ENCODE measurements at regions of chr1 and their contacts with region 1.

Region 1: GRCh38 chr1:53878492-53879105 is 11.0 kb downstream of the YIPF1 start:
- DNase-seq: peak; percentile 39
- H3K4me3 ChIP-seq: no peak overlapping the region
- H3K27ac ChIP-seq: no peak overlapping the region
- H3K4me1 ChIP-seq: no peaks in the 10 kb centered on the region
- H3K27me3 ChIP-seq: no peaks in the 10 kb centered on the region
- CTCF ChIP-seq: peak; percentile 82
- EP300 ChIP-seq: no peak
- RAD21 ChIP-seq: peak; percentile 68

Region 2: DNA sequence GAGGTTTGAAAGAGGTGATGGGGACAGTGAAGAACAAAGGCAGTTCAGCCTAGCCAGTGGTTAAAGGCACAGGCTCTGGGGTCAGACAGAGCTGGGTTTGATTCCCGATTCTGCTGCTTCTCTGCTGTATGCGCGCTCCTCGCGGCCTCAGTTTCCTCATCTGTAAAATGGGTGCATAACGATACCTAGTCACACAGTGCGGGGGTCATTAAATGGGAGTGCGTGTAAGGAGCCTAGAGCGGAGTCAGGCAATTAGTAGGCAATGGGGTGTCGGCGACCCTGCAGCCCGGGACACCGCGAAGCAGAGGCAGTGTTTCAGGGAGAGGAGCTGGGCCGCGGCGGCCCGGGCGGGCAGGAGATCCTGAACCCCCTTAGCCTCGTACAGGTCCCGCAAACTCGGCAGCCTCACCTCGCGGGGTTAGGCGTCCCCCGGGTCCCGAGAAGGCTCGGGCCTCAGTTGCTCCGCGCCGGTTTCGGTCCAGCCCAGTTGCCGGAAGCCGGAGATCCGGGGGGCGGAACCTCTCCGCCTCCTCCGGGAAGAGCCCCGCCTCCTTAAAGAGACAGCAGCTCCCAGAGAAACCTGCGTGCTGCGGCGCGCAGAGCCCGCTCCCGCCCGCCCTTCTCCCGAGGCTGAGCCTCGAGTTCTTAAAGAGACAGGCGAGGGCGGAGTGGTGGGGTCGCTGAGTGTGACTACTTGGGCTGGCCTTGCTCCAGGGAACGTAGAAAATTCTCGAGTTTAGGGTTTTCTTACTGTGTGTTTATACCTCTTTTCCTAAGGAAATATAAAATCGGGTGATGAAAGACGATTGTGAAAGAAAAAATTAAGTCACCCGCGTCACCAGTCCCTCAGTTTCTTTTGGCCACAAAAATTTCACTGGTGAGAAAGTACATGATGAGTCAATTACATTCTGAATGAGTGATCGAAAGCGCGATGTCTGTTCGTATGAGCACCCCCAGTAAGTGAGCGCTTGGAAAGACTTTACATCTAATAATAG is 11.0 kb after region 1 on chr1 and contains the start of gene YIPF1:
- CTCF ChIA-PET with region 1: interaction called, 38 read pairs
- POLR2A ChIA-PET with region 1: no interaction called
- DNase-seq: peak; percentile 94
- H3K4me3 ChIP-seq: peak within 1 kb of the TSS; percentile 80 to 100
- H3K27ac ChIP-seq: peak within 1 kb of the TSS; percentile 54 to 75
- H3K4me1 ChIP-seq: peaks cover 0 to 7% of the 10 kb centered on the region in 2 experiments; a peak in 2 of 4 replicates
- H3K27me3 ChIP-seq: no peaks in the 10 kb centered on the region
- CTCF ChIP-seq: no peak
- EP300 ChIP-seq: no peak
- RAD21 ChIP-seq: no peak
- polyA plus RNA-seq, gene YIPF1: 23.1 and 31.7 TPM in 2 replicates

Region 3: GRCh38 chr1:53927376-53927881 is 48.8 kb after region 1 on chr1:
- CTCF ChIA-PET with region 1: interaction called, 10 read pairs
- POLR2A ChIA-PET with region 1: no interaction called
- DNase-seq: no peak
- H3K4me3 ChIP-seq: no peak overlapping the region
- H3K27ac ChIP-seq: no peak overlapping the region
- H3K4me1 ChIP-seq: no peaks in the 10 kb centered on the region
- H3K27me3 ChIP-seq: no peaks in the 10 kb centered on the region
- CTCF ChIP-seq: no peak
- EP300 ChIP-seq: no peak
- RAD21 ChIP-seq: no peak

Region 4: GRCh38 chr1:53945433-53946251 is 67.0 kb after region 1 on chr1 and contains the start of gene IFT25:
- CTCF ChIA-PET with region 1: interaction called, 100 read pairs
- POLR2A ChIA-PET with region 1: interaction called, 3 read pairs
- DNase-seq: peak; percentile 97
- H3K4me3 ChIP-seq: peak within 1 kb of the TSS; percentile 72 to 95
- H3K27ac ChIP-seq: peak within 1 kb of the TSS; percentile 79 to 92
- H3K4me1 ChIP-seq: peaks cover 11 to 31% of the 10 kb centered on the region in 2 experiments; a peak in 2 of 4 replicates
- H3K27me3 ChIP-seq: no peaks in the 10 kb centered on the region
- CTCF ChIP-seq: no peak
- EP300 ChIP-seq: no peak
- RAD21 ChIP-seq: no peak
- polyA plus RNA-seq, gene IFT25: 25.7 TPM in 2 replicates